ENCODE measurements at regions of chr7 and their contacts with region 1.

Region 1: DNA sequence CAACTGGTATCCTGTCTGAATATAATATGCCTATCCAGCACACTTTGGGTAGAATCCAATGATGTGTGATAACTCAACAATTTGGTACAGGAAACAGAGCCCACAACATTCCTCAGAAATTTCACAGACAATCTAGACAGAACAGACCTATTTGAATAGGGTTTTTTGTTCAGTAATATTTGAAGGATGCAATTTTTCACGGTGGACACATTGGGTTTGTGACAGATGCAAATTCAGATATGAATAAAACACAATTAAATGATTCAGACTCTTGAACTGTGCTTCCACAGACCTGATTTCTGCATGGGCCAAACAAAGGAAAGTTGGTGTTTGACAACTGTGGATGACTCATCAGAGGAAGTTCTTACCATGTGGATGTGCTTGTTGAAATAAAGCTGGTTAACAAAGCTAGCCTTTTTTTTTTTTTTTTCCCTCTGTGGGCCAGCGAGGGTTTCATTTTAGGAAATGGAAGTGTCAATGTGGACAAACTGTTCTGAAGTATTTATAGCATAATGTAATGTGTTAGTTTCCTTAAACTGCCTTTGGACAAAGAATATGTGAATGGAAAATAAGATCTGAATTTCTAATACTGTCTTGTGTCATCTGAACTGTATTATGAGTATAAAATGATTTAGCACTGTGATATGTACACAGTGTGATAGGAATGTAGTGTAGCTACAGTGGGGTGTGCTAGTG is 43.2 kb upstream of the FAM133B start:
- DNase-seq: peak; percentile 48
- H3K4me3 Mint-ChIP-seq: peak overlapping the region; percentile 64
- H3K27ac Mint-ChIP-seq: peak overlapping the region; percentile 94
- H3K4me1 Mint-ChIP-seq: peaks cover 80% of the 10 kb centered on the region
- H3K27me3 Mint-ChIP-seq: no peaks in the 10 kb centered on the region

Region 2: GRCh38 chr7:92648067-92648466 is 14.7 kb after region 1 on chr7:
- intact Hi-C with region 1: loop called (anchors 1 kb)
- DNase-seq: no peak
- H3K4me3 Mint-ChIP-seq: peak overlapping the region; percentile 57
- H3K27ac Mint-ChIP-seq: peak overlapping the region; percentile 98
- H3K4me1 Mint-ChIP-seq: peaks cover 91% of the 10 kb centered on the region
- H3K27me3 Mint-ChIP-seq: no peaks in the 10 kb centered on the region

Region 3: GRCh38 chr7:92731335-92732063 is 98.1 kb after region 1 on chr7:
- intact Hi-C with region 1: loop called (anchors 1 kb)
- DNase-seq: no peak
- H3K4me3 Mint-ChIP-seq: peak overlapping the region; percentile 23
- H3K27ac Mint-ChIP-seq: peak overlapping the region; percentile 92
- H3K4me1 Mint-ChIP-seq: peaks cover 80% of the 10 kb centered on the region
- H3K27me3 Mint-ChIP-seq: no peaks in the 10 kb centered on the region

Region 4: GRCh38 chr7:92854501-92855238 is 221.3 kb after region 1 on chr7:
- intact Hi-C with region 1: loop called (anchors 1 kb)
- DNase-seq: no peak
- H3K4me3 Mint-ChIP-seq: peak overlapping the region; percentile 4
- H3K27ac Mint-ChIP-seq: peak overlapping the region; percentile 89
- H3K4me1 Mint-ChIP-seq: peaks cover 17% of the 10 kb centered on the region
- H3K27me3 Mint-ChIP-seq: no peaks in the 10 kb centered on the region

Measured in activated T-helper 1 cell treated with anti-CD3 and anti-CD28 coated beads, Interleukin-12 subunit alpha, Interleukin-12 subunit beta, Interleukin-2, Interleukin-4 antibody, amounts not matched to agents 30 ng/mL and 10 ng/mL and 1 ng/mL, durations not matched to agents 14 hours and 24 hours and 36 hours (primary cell).